ENCODE measurements at regions of chr6 and their contacts with region 1.

Region 1: DNA sequence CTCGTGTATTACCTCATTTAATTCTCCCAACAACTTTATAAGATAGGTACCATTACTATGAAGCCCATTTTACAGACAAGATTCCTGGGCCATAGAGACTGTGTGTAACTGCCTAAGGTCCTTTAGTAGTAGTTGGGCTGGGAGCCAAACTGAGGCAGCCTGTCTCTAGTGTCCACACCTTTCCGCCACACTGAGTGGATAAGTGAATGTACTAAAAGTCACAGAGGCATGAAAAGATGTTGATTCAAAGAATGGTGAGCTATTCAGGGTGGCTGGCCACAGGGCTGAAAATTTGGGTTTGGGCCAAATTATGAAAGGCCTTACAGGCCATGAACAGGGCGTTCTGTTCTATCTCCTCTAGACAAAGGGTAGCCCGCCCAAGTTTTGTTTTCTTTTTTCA is 11.0 kb downstream of the CD24 start:
- DNase-seq: no peak
- H3K4me3 ChIP-seq: no peak overlapping the region
- H3K27ac ChIP-seq: no peak overlapping the region
- H3K4me1 ChIP-seq: no peaks in the 10 kb centered on the region
- H3K27me3 ChIP-seq: no peaks in the 10 kb centered on the region
- CTCF ChIP-seq: no peak

Region 2: GRCh38 chr6:106927531-106928398 is 35.8 kb before region 1 on chr6:
- intact Hi-C with region 1: loop called (anchors 5 kb)
- DNase-seq: peak; percentile 75
- H3K4me3 ChIP-seq: no peak overlapping the region
- H3K27ac ChIP-seq: no peak overlapping the region
- H3K4me1 ChIP-seq: peaks cover 3% of the 10 kb centered on the region
- H3K27me3 ChIP-seq: no peaks in the 10 kb centered on the region
- CTCF ChIP-seq: no peak

Region 3: GRCh38 chr6:108168501-108169463 is 1205.2 kb after region 1 on chr6:
- intact Hi-C with region 1: no loop called
- DNase-seq: no peak
- H3K4me3 ChIP-seq: peak overlapping the region; percentile 7
- H3K27ac ChIP-seq: no peak overlapping the region
- H3K4me1 ChIP-seq: peaks cover 19% of the 10 kb centered on the region
- H3K27me3 ChIP-seq: peaks cover 93% of the 10 kb centered on the region
- CTCF ChIP-seq: no peak

Measured in colonic mucosa (tissue), 4 donors.